SK-N-SH (cell line): ENCODE measurements at regions of chr13 and their contacts with region 1.

Region 1: DNA sequence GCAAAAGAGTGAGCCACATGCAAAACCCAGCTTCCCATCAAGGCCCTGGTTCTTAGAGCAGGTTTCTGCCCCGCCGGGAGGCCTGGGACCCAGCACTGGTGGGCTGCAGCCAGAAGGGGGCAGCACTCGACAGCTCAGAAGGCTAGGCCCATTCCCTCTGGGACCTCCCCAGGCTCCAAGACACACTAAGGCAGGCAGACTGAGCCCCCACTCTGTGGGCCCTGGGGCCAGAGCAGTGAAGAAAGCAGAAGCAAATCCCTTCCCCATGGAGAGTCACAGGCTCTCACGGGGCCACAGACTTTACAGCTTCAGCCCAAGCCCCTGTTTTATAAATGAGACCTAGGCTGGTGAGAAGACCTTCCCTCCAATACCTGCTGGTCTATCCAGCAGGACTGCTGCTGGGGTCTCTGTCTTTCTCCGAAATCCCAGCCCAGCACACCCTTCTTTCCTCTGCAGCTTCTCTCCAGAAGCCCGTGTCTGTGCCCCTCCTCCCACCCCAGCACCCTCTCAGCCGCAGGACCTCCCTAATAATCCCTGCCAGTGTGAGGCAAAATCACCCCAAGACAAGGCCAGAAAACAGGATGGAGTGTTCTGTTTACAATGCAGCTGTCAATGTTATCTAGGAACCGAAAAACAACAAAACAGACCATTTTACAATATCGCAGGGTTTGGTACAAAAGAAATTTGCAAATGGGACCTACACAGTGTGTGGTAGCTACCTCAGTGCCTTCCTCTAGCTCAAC is 109.3 kb downstream of the ABCC4 start:
- DNase-seq: peak; percentile 77
- H3K4me3 ChIP-seq: no peak overlapping the region; a peak in 1 of 4 replicates
- H3K27ac ChIP-seq: no peak overlapping the region
- H3K4me1 ChIP-seq: no peaks in the 10 kb centered on the region; a peak in 1 of 4 replicates
- H3K27me3 ChIP-seq: no peaks in the 10 kb centered on the region
- CTCF ChIP-seq: peak; percentile 97
- EP300 ChIP-seq: no peak
- RAD21 ChIP-seq: peak; percentile 91

Region 2: GRCh38 chr13:94896719-94897317 is 295.2 kb before region 1 on chr13:
- CTCF ChIA-PET with region 1: no interaction called
- POLR2A ChIA-PET with region 1: no interaction called
- DNase-seq: no peak
- H3K4me3 ChIP-seq: no peak overlapping the region
- H3K27ac ChIP-seq: no peak overlapping the region
- H3K4me1 ChIP-seq: no peaks in the 10 kb centered on the region
- H3K27me3 ChIP-seq: no peaks in the 10 kb centered on the region
- CTCF ChIP-seq: no peak
- EP300 ChIP-seq: no peak
- RAD21 ChIP-seq: no peak

Region 3: DNA sequence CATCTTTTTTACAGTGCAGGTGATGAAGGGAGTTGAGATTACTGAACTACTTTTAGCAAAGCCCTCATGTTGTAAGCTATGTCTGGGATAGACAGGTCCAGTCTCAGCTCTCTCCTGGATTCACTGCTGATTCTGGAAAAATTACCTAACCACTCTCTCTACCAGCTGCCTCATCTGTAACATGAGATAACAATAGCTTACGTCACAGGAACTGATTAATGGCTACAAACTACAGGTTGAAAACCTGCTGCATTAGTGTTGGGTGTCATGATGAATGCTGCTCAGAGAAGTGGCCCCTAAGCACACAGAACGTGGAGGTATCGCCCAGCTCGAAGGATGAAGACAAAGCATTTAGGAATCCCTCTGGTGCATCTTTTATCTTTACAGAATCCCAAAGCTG is 168.6 kb before region 1 on chr13:
- CTCF ChIA-PET with region 1: no interaction called
- POLR2A ChIA-PET with region 1: no interaction called
- DNase-seq: no peak
- H3K4me3 ChIP-seq: no peak overlapping the region
- H3K27ac ChIP-seq: no peak overlapping the region
- H3K4me1 ChIP-seq: peaks cover 0 to 5% of the 10 kb centered on the region in 2 experiments; a peak in 1 of 4 replicates
- H3K27me3 ChIP-seq: no peaks in the 10 kb centered on the region
- CTCF ChIP-seq: no peak
- EP300 ChIP-seq: no peak
- RAD21 ChIP-seq: no peak

Region 4: DNA sequence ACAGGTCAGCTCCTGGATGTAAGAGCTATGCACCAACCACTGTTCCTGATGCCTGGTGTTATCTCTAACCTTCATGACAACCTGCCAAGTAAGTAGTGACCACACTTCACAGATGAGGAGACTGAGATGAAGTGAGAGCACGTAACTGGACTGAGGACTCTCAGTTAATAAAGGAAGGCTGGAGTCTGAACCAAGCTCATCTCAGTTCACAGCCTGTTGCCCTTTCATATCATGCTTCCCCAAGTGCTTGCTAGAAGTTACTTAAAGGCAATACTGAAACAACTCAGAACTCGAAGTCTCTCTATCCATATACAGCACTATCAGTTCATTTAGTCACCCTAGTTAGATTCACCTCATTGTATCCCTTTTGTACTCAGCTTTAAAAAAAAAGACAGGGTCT is 10.4 kb before region 1 on chr13:
- CTCF ChIA-PET with region 1: interaction called, 22 read pairs
- POLR2A ChIA-PET with region 1: no interaction called
- DNase-seq: no peak
- H3K4me3 ChIP-seq: no peak overlapping the region
- H3K27ac ChIP-seq: no peak overlapping the region
- H3K4me1 ChIP-seq: no peaks in the 10 kb centered on the region; a peak in 1 of 4 replicates
- H3K27me3 ChIP-seq: no peaks in the 10 kb centered on the region
- CTCF ChIP-seq: no peak
- EP300 ChIP-seq: no peak
- RAD21 ChIP-seq: no peak

Region 5: GRCh38 chr13:95207769-95208366 is 15.9 kb after region 1 on chr13:
- CTCF ChIA-PET with region 1: interaction called, 33 read pairs
- POLR2A ChIA-PET with region 1: no interaction called
- DNase-seq: peak; percentile 79
- H3K4me3 ChIP-seq: no peak overlapping the region; a peak in 1 of 4 replicates
- H3K27ac ChIP-seq: peak overlapping the region in 1 of 2 experiments; percentile 87; a peak in 2 of 4 replicates
- H3K4me1 ChIP-seq: peaks cover 0 to 9% of the 10 kb centered on the region in 2 experiments; a peak in 2 of 4 replicates
- H3K27me3 ChIP-seq: no peaks in the 10 kb centered on the region
- CTCF ChIP-seq: no peak
- EP300 ChIP-seq: peak in 1 of 2 experiments; percentile 80; a peak in 2 of 4 replicates
- RAD21 ChIP-seq: no peak

Region 6: DNA sequence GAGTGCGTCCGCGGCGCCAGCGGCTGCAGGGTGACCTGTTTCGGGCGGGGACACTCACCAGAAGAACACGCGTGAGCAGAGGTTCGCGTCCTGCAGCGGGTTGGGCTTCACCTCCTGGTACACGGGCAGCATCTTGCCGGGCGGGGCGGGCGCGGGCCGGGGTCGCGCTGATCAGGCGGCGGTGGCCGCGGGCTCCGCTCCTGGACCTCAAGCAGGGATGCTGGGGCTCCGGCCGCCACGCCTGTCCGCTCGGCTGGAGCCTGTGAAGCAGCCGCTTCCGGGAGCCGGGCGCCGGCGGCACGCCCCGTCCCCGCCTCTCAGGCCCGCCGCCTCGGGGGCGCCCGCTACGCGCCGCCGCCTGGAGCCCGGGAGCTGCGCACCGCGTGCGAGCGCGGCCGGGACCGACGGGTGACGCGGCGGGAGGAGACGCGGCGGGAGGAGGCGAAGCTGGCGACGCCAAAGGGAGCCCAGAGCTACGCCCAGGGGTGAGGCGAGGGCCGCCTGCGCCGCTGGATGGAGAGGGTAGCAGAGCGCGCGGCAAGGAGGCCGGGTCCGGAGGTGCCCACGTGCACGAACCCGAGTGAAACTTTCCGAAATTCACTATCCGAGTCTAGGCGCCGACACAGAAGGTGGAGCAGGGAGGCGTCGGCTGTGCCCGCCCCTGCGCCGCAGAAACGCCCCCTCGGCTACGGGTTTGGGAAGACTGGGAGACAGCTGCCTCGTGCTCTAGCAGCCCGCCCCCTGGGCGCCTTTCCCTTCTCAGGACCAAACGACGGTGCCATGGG is 109.4 kb after region 1 on chr13 and contains the start of gene ABCC4:
- CTCF ChIA-PET with region 1: interaction called, 161 read pairs
- POLR2A ChIA-PET with region 1: interaction called, 3 read pairs
- DNase-seq: peak; percentile 91
- H3K4me3 ChIP-seq: peak within 1 kb of the TSS; percentile 66 to 95
- H3K27ac ChIP-seq: peak within 1 kb of the TSS; percentile 58 to 61
- H3K4me1 ChIP-seq: peaks cover 0 to 6% of the 10 kb centered on the region in 2 experiments; a peak in 1 of 4 replicates
- H3K27me3 ChIP-seq: no peaks in the 10 kb centered on the region
- CTCF ChIP-seq: no peak; the same call in 1 of the 2 replicates
- EP300 ChIP-seq: no peak
- RAD21 ChIP-seq: no peak
- polyA plus RNA-seq, gene ABCC4: 7.8 and 10.3 TPM in 2 replicates

Region 7: DNA sequence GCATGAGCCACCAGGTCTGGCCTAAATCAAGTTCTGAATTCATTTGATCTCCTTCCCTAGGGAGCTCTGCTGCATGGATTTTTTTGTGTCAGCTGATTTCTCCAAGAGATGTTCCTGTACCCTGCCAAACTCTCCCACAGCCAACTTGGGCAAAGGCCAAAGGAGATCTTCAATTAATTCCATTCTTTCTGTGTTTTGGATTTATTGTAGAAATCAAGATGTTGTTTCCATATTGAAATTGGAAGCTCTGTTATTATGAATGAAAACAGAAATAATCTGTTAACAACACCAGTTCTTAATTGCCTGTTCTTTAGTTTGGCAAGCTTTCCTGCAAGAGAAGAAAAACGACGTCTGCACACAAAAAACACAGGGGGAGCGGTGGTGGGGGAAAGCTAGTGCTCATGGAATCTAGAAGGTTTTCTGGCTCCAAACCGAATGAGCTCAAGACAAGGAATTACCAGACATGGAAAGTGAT is 195.8 kb after region 1 on chr13:
- CTCF ChIA-PET with region 1: interaction called, 465 read pairs
- POLR2A ChIA-PET with region 1: interaction called, 6 read pairs
- DNase-seq: no peak
- H3K4me3 ChIP-seq: no peak overlapping the region
- H3K27ac ChIP-seq: no peak overlapping the region
- H3K4me1 ChIP-seq: no peaks in the 10 kb centered on the region
- H3K27me3 ChIP-seq: no peaks in the 10 kb centered on the region; the same call in 1 of the 2 replicates
- CTCF ChIP-seq: no peak
- EP300 ChIP-seq: no peak
- RAD21 ChIP-seq: no peak

Region 8: GRCh38 chr13:95480131-95480545 is 288.1 kb after region 1 on chr13:
- CTCF ChIA-PET with region 1: interaction called, 56 read pairs
- POLR2A ChIA-PET with region 1: no interaction called
- DNase-seq: no peak
- H3K4me3 ChIP-seq: no peak overlapping the region
- H3K27ac ChIP-seq: no peak overlapping the region
- H3K4me1 ChIP-seq: peaks cover 0 to 11% of the 10 kb centered on the region in 2 experiments; a peak in 1 of 4 replicates
- H3K27me3 ChIP-seq: no peaks in the 10 kb centered on the region
- CTCF ChIP-seq: no peak
- EP300 ChIP-seq: no peak
- RAD21 ChIP-seq: no peak